MCF 10A (cell line): ENCODE measurements at regions of chr6 and their contacts with region 1.

Region 1: DNA sequence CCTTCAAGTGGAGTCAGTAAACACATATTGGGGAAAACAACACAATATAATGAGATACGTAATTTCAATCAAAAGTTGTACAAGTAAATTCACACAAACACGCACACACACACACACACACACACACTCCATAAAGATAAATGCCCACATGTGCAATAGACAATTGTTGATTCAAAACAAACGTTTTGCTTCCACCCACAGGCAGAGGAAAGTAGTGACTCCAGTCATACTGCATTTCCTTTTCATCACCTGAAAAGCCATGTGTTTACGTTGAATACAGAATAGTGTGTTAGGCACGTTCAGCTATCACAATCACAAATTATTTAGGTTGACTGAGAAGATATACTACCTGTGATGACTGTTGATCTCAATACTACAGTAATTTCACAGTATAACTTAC is 443.8 kb upstream of the MANEA start:
- DNase-seq: peak; percentile 22
- H3K4me3 Mint-ChIP-seq: no peak overlapping the region
- H3K27ac Mint-ChIP-seq: no peak overlapping the region
- H3K4me1 Mint-ChIP-seq: no peaks in the 10 kb centered on the region
- H3K27me3 Mint-ChIP-seq: peaks cover 58% of the 10 kb centered on the region
- CTCF ChIP-seq: peak; percentile 61

Region 2: GRCh38 chr6:94323853-94324252 is 809.7 kb before region 1 on chr6:
- CTCF ChIA-PET with region 1: no interaction called
- POLR2A ChIA-PET with region 1: no interaction called
- intact Hi-C with region 1: loop called (anchors 1 kb)
- DNase-seq: peak; percentile 27
- H3K4me3 Mint-ChIP-seq: no peak overlapping the region
- H3K27ac Mint-ChIP-seq: no peak overlapping the region
- H3K4me1 Mint-ChIP-seq: no peaks in the 10 kb centered on the region
- H3K27me3 Mint-ChIP-seq: peaks cover 24% of the 10 kb centered on the region
- CTCF ChIP-seq: no peak

Region 3: GRCh38 chr6:94636780-94637385 is 496.7 kb before region 1 on chr6:
- CTCF ChIA-PET with region 1: no interaction called
- POLR2A ChIA-PET with region 1: no interaction called
- intact Hi-C with region 1: loop called (anchors 2 kb)
- DNase-seq: peak; percentile 16
- H3K4me3 Mint-ChIP-seq: no peak overlapping the region
- H3K27ac Mint-ChIP-seq: no peak overlapping the region
- H3K4me1 Mint-ChIP-seq: no peaks in the 10 kb centered on the region
- H3K27me3 Mint-ChIP-seq: peaks cover 83% of the 10 kb centered on the region
- CTCF ChIP-seq: peak; percentile 23

Region 4: DNA sequence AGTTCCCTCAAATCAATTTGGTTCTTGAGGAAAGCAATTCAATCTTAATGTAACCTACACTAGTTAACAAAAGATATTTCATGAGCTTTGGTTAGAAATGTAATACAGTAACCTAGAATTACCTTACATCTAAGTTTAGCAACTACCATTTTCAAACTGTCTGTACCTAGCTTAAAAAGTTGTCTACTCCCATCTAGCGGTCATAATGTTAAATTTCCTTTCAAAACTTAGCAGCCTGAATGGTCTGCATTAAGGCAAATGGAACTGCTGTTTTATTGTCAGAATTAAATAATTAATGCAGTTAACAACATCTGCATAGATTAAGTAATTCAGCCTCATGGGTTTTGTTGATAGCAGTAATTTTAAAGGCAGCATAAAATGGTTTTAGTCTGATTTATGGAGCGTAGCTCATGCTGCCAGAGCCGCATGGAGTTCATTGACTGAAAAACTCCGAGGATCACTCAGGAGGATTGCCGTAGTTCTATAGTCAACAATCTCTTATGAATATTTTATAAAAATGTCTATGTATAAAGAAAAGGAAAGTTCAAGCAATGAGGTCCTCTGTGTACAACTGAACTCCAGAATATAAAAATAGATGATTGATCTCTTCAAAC is 41.6 kb before region 1 on chr6:
- CTCF ChIA-PET with region 1: no interaction called
- POLR2A ChIA-PET with region 1: no interaction called
- intact Hi-C with region 1: loop called (anchors 2 kb)
- DNase-seq: peak; percentile 54
- H3K4me3 Mint-ChIP-seq: no peak overlapping the region
- H3K27ac Mint-ChIP-seq: no peak overlapping the region
- H3K4me1 Mint-ChIP-seq: peaks cover 18% of the 10 kb centered on the region
- H3K27me3 Mint-ChIP-seq: no peaks in the 10 kb centered on the region
- CTCF ChIP-seq: peak; percentile 56